HAP-1 (cell line): ENCODE measurements at regions of chr9 and their contacts with region 1.

Region 1: GRCh38 chr9:115591584-115591984 is 473.6 kb upstream of the TNC start:
- DNase-seq: peak; percentile 66 to 87
- H3K4me3 ChIP-seq: no peak overlapping the region
- H3K4me1 ChIP-seq: no peaks in the 10 kb centered on the region
- H3K27me3 ChIP-seq: peaks cover 2% of the 10 kb centered on the region; the same call in 1 of the 2 replicates

Region 2: DNA sequence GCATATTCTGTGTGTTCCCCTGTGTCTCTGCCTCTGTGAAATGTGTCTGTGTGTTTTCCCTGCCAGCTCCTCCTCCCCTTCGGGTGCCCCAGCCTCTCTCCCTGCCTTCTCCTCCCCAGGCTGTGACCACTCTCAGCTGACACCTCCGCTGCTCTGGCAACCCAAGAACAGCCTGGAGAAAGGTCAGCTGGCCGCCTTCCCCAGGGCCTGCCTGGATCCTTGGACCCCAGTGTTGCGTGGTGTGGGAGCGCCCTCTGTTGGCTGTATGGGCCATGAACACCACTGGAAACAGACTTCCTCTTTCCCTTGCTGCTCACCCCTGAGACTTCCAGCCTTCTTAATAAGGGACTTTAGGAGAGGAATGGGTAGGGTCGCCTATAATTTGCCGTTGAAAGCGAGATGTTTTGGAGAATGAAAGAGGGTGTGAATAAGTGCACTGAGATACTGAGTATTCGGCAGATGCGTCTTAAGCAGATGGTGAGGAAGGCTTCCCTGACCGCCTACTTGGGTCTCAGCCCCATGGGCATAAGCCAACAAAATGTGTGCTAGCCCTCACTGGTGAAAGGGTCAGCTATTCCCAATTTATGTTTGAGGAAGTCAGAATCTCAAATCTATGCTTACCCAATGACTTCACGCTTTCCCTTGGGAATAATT is 980.6 kb after region 1 on chr9:
- in situ Hi-C with region 1: loop called (anchors 10 kb)
- DNase-seq: peak; percentile 53 to 82
- H3K4me3 ChIP-seq: no peak overlapping the region
- H3K4me1 ChIP-seq: peaks cover 18% of the 10 kb centered on the region
- H3K27me3 ChIP-seq: no peaks in the 10 kb centered on the region

Region 3: GRCh38 chr9:116661037-116661954 is 1069.7 kb after region 1 on chr9:
- in situ Hi-C with region 1: loop called (anchors 10 kb)
- DNase-seq: peak; percentile 31 to 78
- H3K4me3 ChIP-seq: no peak overlapping the region
- H3K4me1 ChIP-seq: no peaks in the 10 kb centered on the region
- H3K27me3 ChIP-seq: no peaks in the 10 kb centered on the region